A673 (cell line): ENCODE measurements at regions of chr5 and their contacts with region 1.

Region 1: GRCh38 chr5:126531543-126532120 is 63.4 kb downstream of the ALDH7A1 start:
- DNase-seq: no peak
- H3K4me3 ChIP-seq: no peak overlapping the region
- H3K27ac ChIP-seq: no peak overlapping the region
- H3K4me1 ChIP-seq: no peaks in the 10 kb centered on the region
- H3K27me3 ChIP-seq: no peaks in the 10 kb centered on the region
- CTCF ChIP-seq: no peak

Region 2: DNA sequence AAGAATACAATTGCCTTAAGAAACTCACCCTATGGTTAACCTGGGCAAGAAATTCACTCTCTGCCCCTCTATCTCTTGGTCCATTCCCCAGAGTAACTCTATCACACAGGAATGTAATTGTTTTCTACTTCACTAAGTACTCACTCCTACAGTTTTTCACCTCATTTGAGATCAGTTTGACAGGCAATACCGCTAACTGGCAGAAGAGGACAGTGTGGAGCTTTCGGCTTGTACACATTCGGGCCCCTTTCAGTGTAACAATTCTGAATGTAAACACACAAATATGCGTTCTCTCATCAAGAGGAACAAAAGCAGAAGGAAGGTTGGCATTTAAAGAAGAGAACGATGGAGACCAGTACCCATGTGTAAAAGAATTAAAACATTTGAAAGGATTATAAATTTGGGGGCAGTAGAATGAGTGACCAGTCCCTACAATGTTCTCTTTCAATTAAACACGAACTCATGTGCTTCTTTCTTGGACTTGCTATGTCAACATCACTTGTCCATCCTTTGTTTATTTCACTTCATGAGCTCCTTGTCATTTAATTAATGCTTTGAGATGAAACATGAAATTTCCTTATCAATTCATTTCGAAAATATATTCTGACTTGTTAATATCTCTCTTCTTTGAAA is 297.0 kb before region 1 on chr5:
- CTCF ChIA-PET with region 1: no interaction called
- POLR2A ChIA-PET with region 1: no interaction called
- intact Hi-C with region 1: loop called (anchors 10 kb)
- DNase-seq: peak; percentile 47
- H3K4me3 ChIP-seq: no peak overlapping the region
- H3K27ac ChIP-seq: no peak overlapping the region
- H3K4me1 ChIP-seq: no peaks in the 10 kb centered on the region
- H3K27me3 ChIP-seq: peaks cover 23% of the 10 kb centered on the region
- CTCF ChIP-seq: peak; percentile 78